HEK293 (cell line): ENCODE measurements at regions of chr17 and their contacts with region 1.

Region 1: DNA sequence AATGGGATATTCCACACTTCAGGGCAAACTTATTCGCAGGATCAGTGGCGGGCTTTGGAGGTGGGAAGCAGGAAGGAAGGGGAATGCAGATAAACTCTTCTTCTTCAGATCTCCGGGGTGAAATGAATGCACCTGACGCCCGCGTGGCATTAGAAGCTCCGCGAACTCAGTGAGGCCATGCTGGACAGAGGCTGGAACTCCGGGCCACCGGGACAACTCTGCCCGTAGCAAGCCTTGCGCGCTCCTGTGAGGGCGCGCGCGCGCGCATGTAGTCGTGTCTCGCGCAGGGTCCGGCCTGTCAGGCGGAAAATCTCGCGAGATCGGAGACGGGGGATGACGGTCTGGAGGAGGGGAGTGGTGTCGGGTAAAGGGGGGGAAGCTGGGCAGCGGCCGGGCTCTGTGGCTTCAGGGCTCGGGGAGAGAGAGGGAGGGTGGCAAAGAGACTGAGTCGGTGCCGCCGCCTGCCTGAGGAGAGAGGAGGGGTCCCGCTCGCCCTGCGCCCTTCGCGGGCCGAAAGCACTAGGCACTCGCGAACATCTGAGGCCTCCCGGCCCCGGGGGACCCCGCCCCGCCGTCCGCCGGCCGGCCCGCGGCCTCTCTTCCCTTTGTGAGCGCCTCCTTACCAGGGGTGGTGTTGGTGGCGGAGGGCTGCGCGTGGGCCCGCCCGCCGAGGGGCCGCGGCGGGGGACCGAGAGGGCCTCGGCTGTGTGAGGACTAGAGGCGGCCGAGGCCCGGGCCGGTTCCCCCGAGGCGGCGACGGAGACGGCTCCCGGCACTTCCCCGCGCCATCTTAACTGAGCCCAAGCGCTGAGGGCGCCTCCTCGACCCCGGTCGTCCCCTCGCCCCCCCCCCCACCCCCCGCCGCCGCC is at the start of gene TAOK1:
- H3K4me3 ChIP-seq: peak within 1 kb of the TSS; percentile 60
- H3K27ac ChIP-seq: peak within 1 kb of the TSS; percentile 99
- H3K4me1 ChIP-seq: peaks cover 12% of the 10 kb centered on the region; the same call in 1 of the 2 replicates
- CTCF ChIP-seq: no peak; the same call in 1 of the 2 replicates

Region 2: DNA sequence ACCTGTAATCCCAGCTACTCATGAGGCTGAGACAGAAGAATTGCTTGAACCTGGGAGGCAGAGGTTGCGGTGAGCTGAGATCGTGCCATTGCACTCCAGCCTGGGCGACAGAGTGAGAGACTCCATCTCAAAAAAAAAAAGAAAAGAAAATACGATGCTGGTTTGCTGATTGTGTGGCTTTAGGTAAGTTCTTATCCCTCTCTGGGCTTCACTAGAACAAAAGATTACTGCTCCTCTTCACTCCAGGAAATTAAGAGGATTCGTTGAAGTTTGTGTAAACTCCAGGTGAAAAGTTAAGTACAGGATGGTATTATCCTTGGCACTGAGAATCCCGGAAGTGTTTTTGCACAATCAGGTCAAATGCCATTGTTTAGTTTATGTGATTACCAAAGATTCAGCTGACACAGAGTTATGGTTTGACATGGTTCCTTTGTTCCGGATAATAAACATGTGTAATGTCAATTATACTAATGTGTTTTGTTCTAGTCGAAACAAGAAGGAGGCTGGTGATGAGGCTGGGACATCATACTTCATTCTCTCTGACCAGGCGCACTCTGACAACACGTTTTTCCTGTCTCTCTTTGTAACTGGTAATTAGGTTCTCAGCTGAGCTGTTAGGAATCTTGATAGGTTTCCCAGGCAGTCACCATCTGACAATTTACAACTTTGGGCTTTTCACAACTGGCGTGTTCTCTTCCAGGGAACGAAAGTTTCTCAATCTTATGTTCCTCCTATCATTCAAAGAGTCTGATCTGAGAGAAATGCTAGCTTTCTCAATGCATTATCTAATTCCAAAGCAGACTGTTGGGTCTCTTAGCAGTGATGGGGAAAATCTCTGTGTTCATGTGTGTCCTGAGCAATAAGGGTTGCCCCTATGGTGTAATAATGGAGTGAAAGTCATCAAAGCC is 10.9 kb before region 1 on chr17:
- CTCF ChIA-PET with region 1: interaction called, 4 read pairs
- POLR2A ChIA-PET with region 1: interaction called, 11 read pairs
- H3K4me3 ChIP-seq: no peak overlapping the region
- H3K27ac ChIP-seq: no peak overlapping the region
- H3K4me1 ChIP-seq: 0 out of 2 replicates have a peak, but pooled peaks cover 3% of the 10 kb centered on the region
- CTCF ChIP-seq: no peak